Activated naive CD4-positive, alpha-beta T cell treated with anti-CD3 and anti-CD28 coated beads for 36 hours (primary cell): ENCODE measurements at regions of chr21 and their contacts with region 1.

Region 1: DNA sequence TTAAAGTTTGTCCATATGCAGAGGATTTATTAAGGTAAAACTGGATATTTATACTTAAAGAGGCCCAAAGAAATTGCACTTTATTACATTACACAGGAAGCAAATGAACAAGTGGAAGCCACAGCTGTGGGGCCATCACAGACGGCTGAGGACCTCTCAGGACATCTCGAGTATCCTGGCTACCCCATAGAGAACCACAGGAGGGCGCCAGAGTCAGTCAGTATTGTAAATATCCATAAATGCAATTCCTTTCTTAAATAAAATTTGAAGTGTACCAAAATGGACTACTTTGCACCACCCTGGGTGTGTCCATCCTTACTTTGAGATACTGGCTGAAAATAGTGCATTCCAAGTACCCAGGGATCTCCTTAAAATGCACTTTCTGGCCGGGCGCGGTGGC is 257.2 kb downstream of the MRPL39 start:
- DNase-seq: peak; percentile 66
- H3K4me3 Mint-ChIP-seq: no peak overlapping the region
- H3K27ac Mint-ChIP-seq: no peak overlapping the region
- H3K4me1 Mint-ChIP-seq: peaks cover 7% of the 10 kb centered on the region
- H3K27me3 Mint-ChIP-seq: peaks cover 27% of the 10 kb centered on the region

Region 2: DNA sequence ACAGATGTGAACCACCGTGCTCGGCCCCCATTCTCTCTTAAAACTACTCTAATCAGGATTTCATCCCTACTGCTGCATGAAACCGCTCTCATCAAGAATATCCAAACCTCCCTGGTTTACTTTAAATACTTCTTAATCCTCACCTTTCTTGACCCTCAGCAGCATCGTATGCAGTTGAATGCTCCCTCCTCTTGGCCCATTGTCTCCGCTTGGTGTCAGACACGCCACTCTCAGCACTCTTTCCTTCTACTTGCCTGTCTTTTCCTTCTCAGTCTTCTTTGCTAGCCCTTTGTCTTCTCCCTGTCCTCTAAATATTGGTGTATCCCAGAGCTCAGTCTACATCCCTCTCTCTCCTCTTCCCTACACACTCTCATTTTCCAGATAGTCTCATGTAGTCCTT is 57.7 kb before region 1 on chr21:
- CTCF ChIA-PET with region 1: no interaction called
- intact Hi-C with region 1: no loop called
- DNase-seq: no peak
- H3K4me3 Mint-ChIP-seq: no peak overlapping the region
- H3K27ac Mint-ChIP-seq: no peak overlapping the region
- H3K4me1 Mint-ChIP-seq: no peaks in the 10 kb centered on the region
- H3K27me3 Mint-ChIP-seq: no peaks in the 10 kb centered on the region

Region 3: GRCh38 chr21:25360593-25360992 is 10.5 kb after region 1 on chr21:
- CTCF ChIA-PET with region 1: interaction called, 10 read pairs
- intact Hi-C with region 1: no loop called
- DNase-seq: no peak
- H3K4me3 Mint-ChIP-seq: no peak overlapping the region
- H3K27ac Mint-ChIP-seq: no peak overlapping the region
- H3K4me1 Mint-ChIP-seq: peaks cover 22% of the 10 kb centered on the region
- H3K27me3 Mint-ChIP-seq: peaks cover 5% of the 10 kb centered on the region

Region 4: GRCh38 chr21:25568246-25568645 is 218.2 kb after region 1 on chr21:
- CTCF ChIA-PET with region 1: no interaction called
- intact Hi-C with region 1: loop called (anchors 5 kb)
- DNase-seq: no peak
- H3K4me3 Mint-ChIP-seq: peak overlapping the region; percentile 91
- H3K27ac Mint-ChIP-seq: peak overlapping the region; percentile 96
- H3K4me1 Mint-ChIP-seq: peaks cover 40% of the 10 kb centered on the region
- H3K27me3 Mint-ChIP-seq: no peaks in the 10 kb centered on the region

Region 5: GRCh38 chr21:25708467-25709065 is 358.5 kb after region 1 on chr21:
- CTCF ChIA-PET with region 1: no interaction called
- intact Hi-C with region 1: loop called (anchors 1 kb)
- DNase-seq: peak; percentile 60
- H3K4me3 Mint-ChIP-seq: no peak overlapping the region
- H3K27ac Mint-ChIP-seq: no peak overlapping the region
- H3K4me1 Mint-ChIP-seq: no peaks in the 10 kb centered on the region
- H3K27me3 Mint-ChIP-seq: no peaks in the 10 kb centered on the region